ENCODE measurements at regions of chr2 and their contacts with region 1.

Region 1: DNA sequence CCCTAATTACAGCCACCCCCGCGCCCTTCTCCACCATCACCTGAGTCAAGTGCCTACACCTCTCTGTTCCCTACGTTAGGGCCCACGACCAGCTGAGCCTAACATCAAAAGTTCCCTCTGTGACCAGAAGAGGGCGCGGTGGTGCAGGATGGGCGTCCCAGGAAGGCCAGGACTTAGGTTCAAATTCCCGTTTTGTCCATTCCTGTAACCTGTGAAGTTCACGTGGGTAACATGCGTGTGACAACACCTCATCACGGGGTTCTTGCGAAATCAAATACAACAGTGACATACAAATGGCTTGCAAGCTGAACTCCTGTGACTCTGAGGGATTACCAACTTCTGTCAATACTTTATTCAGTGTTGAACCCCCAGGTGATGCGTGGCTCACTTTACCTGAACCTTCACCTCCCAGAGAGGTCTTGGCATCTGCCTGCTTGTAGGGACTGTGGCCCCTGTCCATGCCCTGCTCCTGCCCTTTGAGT is 207.9 kb downstream of the ARL4C start:
- DNase-seq: peak; percentile 41
- ATAC-seq: no peak
- H3K4me3 ChIP-seq: no peak overlapping the region
- H3K27ac ChIP-seq: no peak overlapping the region
- H3K4me1 ChIP-seq: peaks cover 18% of the 10 kb centered on the region
- H3K27me3 ChIP-seq: no peaks in the 10 kb centered on the region
- CTCF ChIP-seq: peak; percentile 65
- POLR2A ChIP-seq: no peak
- RAD21 ChIP-seq: peak; percentile 71

Region 2: GRCh38 chr2:234300932-234301823 is 12.2 kb after region 1 on chr2:
- CTCF ChIA-PET with region 1: interaction called, 4 read pairs
- POLR2A ChIA-PET with region 1: no interaction called
- dilution Hi-C with region 1: no loop called
- in situ Hi-C with region 1: no loop called
- intact Hi-C with region 1: loop called (anchors 1 kb)
- DNase-seq: no peak
- ATAC-seq: peak; percentile 44
- H3K4me3 ChIP-seq: no peak overlapping the region
- H3K27ac ChIP-seq: no peak overlapping the region
- H3K4me1 ChIP-seq: peaks cover 7% of the 10 kb centered on the region; the same call in 1 of the 2 replicates
- H3K27me3 ChIP-seq: peaks cover 6% of the 10 kb centered on the region; the same call in 1 of the 2 replicates
- CTCF ChIP-seq: no peak
- POLR2A ChIP-seq: no peak
- RAD21 ChIP-seq: no peak

Region 3: GRCh38 chr2:234544659-234545611 is 255.9 kb after region 1 on chr2:
- CTCF ChIA-PET with region 1: no interaction called
- POLR2A ChIA-PET with region 1: no interaction called
- dilution Hi-C with region 1: no loop called
- in situ Hi-C with region 1: no loop called
- intact Hi-C with region 1: loop called (anchors 1 kb)
- DNase-seq: peak; percentile 59
- ATAC-seq: peak; percentile 95
- H3K4me3 ChIP-seq: no peak overlapping the region
- H3K27ac ChIP-seq: no peak overlapping the region
- H3K4me1 ChIP-seq: no peaks in the 10 kb centered on the region
- H3K27me3 ChIP-seq: no peaks in the 10 kb centered on the region; the same call in 1 of the 2 replicates
- CTCF ChIP-seq: peak; percentile 77
- POLR2A ChIP-seq: no peak
- RAD21 ChIP-seq: peak; percentile 88

Region 4: DNA sequence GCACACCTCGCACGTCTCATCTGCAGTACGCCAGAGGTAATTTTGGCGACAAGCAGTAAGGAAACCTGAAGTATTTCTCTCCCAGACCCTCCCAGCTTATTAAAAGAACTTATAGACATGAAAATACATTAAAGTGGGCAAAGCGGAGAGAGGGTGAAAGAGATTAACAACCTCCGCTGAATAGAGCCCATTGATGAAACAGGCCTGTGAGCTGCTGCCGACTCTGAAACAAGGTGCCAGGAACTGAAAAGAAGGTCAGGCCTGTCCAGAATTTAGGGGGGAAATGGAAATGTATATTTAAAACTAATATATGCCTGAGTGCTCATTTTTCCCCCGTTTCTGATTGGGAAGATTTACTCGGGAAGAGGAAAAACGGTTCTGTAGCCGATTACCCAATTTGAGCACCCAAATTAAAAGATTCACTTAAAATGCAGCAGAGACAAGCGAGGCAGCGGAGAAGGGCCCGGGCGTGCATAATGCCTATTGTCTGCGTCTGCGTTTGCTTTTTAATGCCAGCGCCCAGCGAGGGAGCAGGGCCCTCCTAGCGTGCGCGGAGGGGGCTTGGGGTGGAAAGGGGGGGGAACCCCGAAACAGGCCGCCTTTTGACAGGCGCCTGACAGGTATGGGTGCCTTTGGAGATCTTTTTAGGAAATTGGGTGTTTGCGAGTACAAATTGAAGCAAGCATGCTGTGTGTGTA is 1563.0 kb after region 1 on chr2:
- CTCF ChIA-PET with region 1: no interaction called
- POLR2A ChIA-PET with region 1: no interaction called
- dilution Hi-C with region 1: no loop called
- in situ Hi-C with region 1: no loop called
- intact Hi-C with region 1: no loop called
- DNase-seq: no peak
- ATAC-seq: no peak
- H3K4me3 ChIP-seq: no peak overlapping the region
- H3K27ac ChIP-seq: no peak overlapping the region
- H3K4me1 ChIP-seq: no peaks in the 10 kb centered on the region
- H3K27me3 ChIP-seq: no peaks in the 10 kb centered on the region
- CTCF ChIP-seq: no peak
- POLR2A ChIP-seq: no peak
- RAD21 ChIP-seq: no peak